CD8-positive, alpha-beta T cell (primary cell): ENCODE measurements at regions of chr16 and their contacts with region 1.

Region 1: DNA sequence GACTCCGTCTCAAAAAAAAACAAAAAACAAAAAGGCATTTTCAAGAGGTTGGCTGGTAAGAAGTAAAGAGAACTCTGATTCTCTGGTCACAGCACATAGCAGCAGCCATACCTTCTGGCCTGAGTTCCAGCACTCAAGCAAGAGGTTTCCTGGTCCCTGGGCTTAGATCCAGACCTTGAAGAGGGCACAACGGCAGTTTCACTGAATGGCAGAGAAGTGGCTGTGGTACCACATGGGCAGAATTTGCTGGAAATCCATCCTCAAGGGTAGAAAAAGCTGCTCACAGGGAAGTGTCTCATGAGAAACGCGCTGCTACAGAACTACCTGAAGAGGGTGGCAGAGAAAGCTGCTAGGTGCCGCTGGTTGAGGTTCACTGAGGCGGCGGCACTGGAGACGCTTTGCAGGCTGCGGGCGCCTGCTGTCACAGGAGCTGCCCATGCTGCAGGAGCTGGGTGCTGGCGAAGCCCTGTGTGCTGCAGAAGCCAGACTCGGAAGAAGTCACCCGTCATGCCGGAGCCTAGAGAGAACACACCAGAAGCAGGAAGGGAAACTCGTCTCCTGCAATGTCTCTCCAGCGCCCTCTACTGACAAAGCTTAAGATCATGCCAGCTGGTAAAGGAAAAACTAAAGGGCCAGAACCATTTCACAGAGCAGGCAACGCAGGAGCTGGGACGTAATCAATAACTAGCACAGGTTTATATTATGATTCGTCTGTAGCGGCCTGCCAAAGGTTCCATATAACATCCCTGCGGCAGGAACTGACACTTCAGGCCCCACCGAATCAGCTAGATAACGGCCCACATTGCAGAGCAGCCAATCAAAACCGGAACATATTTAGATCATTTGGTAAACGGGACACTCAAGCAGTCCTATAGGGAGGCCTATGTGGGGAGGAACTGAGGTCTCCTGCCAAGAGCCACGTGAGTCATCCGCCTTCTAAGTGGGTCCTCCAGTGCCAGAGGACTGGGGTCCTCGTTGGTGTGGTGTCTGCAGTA is 5.4 kb upstream of the ZNF213 start:
- DNase-seq: peak; percentile 56 to 94 (median 82)
- ATAC-seq: peak; percentile 73
- H3K4me3 ChIP-seq: peak overlapping the region; percentile 71 to 75
- H3K4me3 Mint-ChIP-seq: peak overlapping the region; percentile 93
- H3K27ac ChIP-seq: peak overlapping the region; percentile 41 to 65
- H3K27ac Mint-ChIP-seq: peak overlapping the region; percentile 92
- H3K4me1 ChIP-seq: peaks cover 36% of the 10 kb centered on the region
- H3K4me1 Mint-ChIP-seq: peaks cover 62% of the 10 kb centered on the region
- H3K27me3 ChIP-seq: no peaks in the 10 kb centered on the region
- H3K27me3 Mint-ChIP-seq: no peaks in the 10 kb centered on the region
- CTCF ChIP-seq: peak; percentile 86

Region 2: GRCh38 chr16:3003582-3004302 is 125.7 kb before region 1 on chr16:
- CTCF ChIA-PET with region 1: interaction called, 13 read pairs
- POLR2A ChIA-PET with region 1: interaction called, 7 read pairs
- intact Hi-C with region 1: no loop called
- DNase-seq: peak; percentile 91 to 99 (median 95)
- ATAC-seq: peak; percentile 99
- H3K4me3 ChIP-seq: no peak overlapping the region
- H3K4me3 Mint-ChIP-seq: peak overlapping the region; percentile 81
- H3K27ac ChIP-seq: no peak overlapping the region
- H3K27ac Mint-ChIP-seq: no peak overlapping the region
- H3K4me1 ChIP-seq: peaks cover 21% of the 10 kb centered on the region
- H3K4me1 Mint-ChIP-seq: peaks cover 28% of the 10 kb centered on the region
- H3K27me3 ChIP-seq: peaks cover 0 to 4% of the 10 kb centered on the region in 2 experiments
- H3K27me3 Mint-ChIP-seq: no peaks in the 10 kb centered on the region
- CTCF ChIP-seq: peak; percentile 54

Region 3: DNA sequence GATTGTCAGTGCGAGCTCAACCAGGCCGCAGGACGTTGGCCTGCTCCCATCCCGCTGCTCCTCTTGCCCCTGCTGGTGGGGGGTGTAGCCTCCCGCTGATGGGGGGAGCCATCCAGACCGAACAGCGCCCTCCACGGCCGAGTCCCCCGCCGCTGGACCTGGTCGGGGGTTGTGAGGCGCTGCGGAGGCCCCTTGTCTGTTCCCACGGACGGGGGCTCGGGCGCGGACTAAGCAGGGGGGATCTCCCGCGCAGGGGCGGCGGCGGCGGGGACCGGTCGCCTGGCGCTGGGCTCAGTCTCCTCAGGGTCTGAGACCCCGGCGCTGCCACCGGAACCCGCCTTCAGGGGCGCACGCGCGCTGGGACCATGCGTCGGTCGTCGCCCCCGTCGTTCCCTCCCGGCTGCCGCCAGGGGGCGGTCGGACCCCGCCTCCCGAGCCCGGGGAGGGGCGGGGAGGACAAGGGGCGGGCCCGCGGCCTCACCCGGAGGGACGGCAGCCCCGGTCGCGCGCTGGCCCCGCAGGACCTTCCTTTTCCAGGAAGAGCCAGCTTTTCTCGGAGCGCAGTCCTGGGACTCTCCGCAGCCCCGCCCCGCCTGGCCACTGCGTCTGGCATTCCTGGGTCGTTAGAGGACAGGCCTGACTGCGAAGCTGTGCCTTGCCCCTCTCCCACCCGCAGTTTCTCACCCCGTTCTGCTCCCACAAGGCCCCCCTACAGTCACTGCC is 70.3 kb before region 1 on chr16:
- CTCF ChIA-PET with region 1: interaction called, 324 read pairs
- POLR2A ChIA-PET with region 1: interaction called, 36 read pairs
- intact Hi-C with region 1: loop called (anchors 1 kb)
- DNase-seq: peak; percentile 74 to 95 (median 87)
- ATAC-seq: peak; percentile 87
- H3K4me3 ChIP-seq: peak overlapping the region; percentile 84 to 85
- H3K4me3 Mint-ChIP-seq: peak overlapping the region; percentile 86
- H3K27ac ChIP-seq: peak overlapping the region; percentile 60 to 86
- H3K27ac Mint-ChIP-seq: peak overlapping the region; percentile 86
- H3K4me1 ChIP-seq: peaks cover 45% of the 10 kb centered on the region
- H3K4me1 Mint-ChIP-seq: peaks cover 49% of the 10 kb centered on the region
- H3K27me3 ChIP-seq: no peaks in the 10 kb centered on the region
- H3K27me3 Mint-ChIP-seq: no peaks in the 10 kb centered on the region
- CTCF ChIP-seq: peak; percentile 88

Region 4: GRCh38 chr16:3087243-3088235 is 41.9 kb before region 1 on chr16:
- CTCF ChIA-PET with region 1: interaction called, 27 read pairs
- POLR2A ChIA-PET with region 1: interaction called, 6 read pairs
- intact Hi-C with region 1: no loop called
- DNase-seq: no peak
- ATAC-seq: no peak
- H3K4me3 ChIP-seq: peak overlapping the region; percentile 7 to 32
- H3K4me3 Mint-ChIP-seq: no peak overlapping the region
- H3K27ac ChIP-seq: peak overlapping the region in 1 of 2 experiments; percentile 37
- H3K27ac Mint-ChIP-seq: no peak overlapping the region
- H3K4me1 ChIP-seq: peaks cover 22% of the 10 kb centered on the region
- H3K4me1 Mint-ChIP-seq: peaks cover 42% of the 10 kb centered on the region
- H3K27me3 ChIP-seq: no peaks in the 10 kb centered on the region
- H3K27me3 Mint-ChIP-seq: no peaks in the 10 kb centered on the region
- CTCF ChIP-seq: no peak

Region 5: GRCh38 chr16:3106205-3106928 is 23.1 kb before region 1 on chr16:
- CTCF ChIA-PET with region 1: interaction called, 256 read pairs
- POLR2A ChIA-PET with region 1: interaction called, 10 read pairs
- intact Hi-C with region 1: loop called (anchors 1 kb)
- DNase-seq: peak; percentile 79 to 95 (median 90)
- ATAC-seq: peak; percentile 94
- H3K4me3 ChIP-seq: peak overlapping the region; percentile 74 to 77
- H3K4me3 Mint-ChIP-seq: peak overlapping the region; percentile 86
- H3K27ac ChIP-seq: peak overlapping the region; percentile 75 to 93
- H3K27ac Mint-ChIP-seq: peak overlapping the region; percentile 89
- H3K4me1 ChIP-seq: peaks cover 24% of the 10 kb centered on the region
- H3K4me1 Mint-ChIP-seq: peaks cover 26% of the 10 kb centered on the region
- H3K27me3 ChIP-seq: no peaks in the 10 kb centered on the region
- H3K27me3 Mint-ChIP-seq: no peaks in the 10 kb centered on the region
- CTCF ChIP-seq: no peak

Region 6: DNA sequence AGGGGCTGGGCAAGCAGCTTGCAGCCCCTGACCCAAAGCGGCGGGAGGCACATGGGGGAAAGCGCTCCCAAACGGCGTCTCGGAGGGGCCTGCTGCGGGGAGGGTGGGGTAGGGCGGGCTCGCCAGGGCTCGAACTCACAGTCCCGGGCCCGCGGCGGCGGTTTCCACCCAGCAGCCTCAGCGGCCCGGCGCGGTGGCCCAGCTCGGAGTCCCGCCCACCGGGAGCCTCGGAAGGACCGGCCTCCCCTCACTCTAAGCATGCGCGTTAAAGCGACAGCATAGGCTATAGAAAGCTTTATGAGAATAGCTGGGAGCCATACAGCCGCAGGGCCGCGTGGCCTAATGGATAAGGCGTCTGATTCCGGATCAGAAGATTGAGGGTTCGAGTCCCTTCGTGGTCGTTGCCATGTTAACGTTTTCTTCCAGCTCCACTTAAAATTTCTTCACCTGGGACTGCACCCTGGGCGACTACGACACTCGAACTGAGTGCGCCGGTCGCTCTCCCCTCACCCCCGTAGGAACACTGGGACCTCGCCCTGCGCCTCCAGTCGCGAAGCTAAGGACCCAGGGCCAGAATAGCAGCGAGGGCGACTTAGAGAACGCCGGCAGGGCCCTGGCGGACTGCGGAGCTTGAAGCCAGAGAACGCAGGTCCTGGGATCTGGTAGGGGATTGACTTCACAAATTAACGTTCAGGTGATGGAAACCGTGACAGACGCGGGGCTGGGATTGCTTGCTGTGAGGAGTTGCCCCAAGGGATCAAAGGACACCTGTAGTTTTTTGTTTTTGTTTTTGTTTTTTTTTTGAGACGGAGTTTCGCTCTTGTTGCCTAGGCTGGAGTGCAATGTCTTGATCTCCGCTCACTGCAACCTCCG is 21.1 kb after region 1 on chr16:
- CTCF ChIA-PET with region 1: interaction called, 5 read pairs
- POLR2A ChIA-PET with region 1: interaction called, 28 read pairs
- intact Hi-C with region 1: no loop called
- DNase-seq: peak; percentile 94 to 100 (median 97)
- ATAC-seq: peak; percentile 82
- H3K4me3 ChIP-seq: peak overlapping the region; percentile 53 to 93
- H3K4me3 Mint-ChIP-seq: peak overlapping the region; percentile 88
- H3K27ac ChIP-seq: peak overlapping the region; percentile 53 to 68
- H3K27ac Mint-ChIP-seq: peak overlapping the region; percentile 88
- H3K4me1 ChIP-seq: peaks cover 23% of the 10 kb centered on the region
- H3K4me1 Mint-ChIP-seq: peaks cover 27% of the 10 kb centered on the region
- H3K27me3 ChIP-seq: no peaks in the 10 kb centered on the region
- H3K27me3 Mint-ChIP-seq: no peaks in the 10 kb centered on the region
- CTCF ChIP-seq: no peak

Region 7: GRCh38 chr16:3173892-3174617 is 44.6 kb after region 1 on chr16:
- CTCF ChIA-PET with region 1: interaction called, 63 read pairs
- POLR2A ChIA-PET with region 1: interaction called, 4 read pairs
- intact Hi-C with region 1: no loop called
- DNase-seq: peak in 1 of 9 experiments; percentile 38
- ATAC-seq: peak; percentile 7
- H3K4me3 ChIP-seq: no peak overlapping the region
- H3K4me3 Mint-ChIP-seq: peak overlapping the region; percentile 26
- H3K27ac ChIP-seq: no peak overlapping the region
- H3K27ac Mint-ChIP-seq: no peak overlapping the region
- H3K4me1 ChIP-seq: peaks cover 44% of the 10 kb centered on the region
- H3K4me1 Mint-ChIP-seq: peaks cover 39% of the 10 kb centered on the region
- H3K27me3 ChIP-seq: peaks cover 30 to 54% of the 10 kb centered on the region in 2 experiments
- H3K27me3 Mint-ChIP-seq: peaks cover 47% of the 10 kb centered on the region
- CTCF ChIP-seq: no peak